Left ventricle myocardium inferior (tissue), 1 donor: ENCODE measurements at regions of chr6 and their contacts with region 1.

Region 1: GRCh38 chr6:74091136-74091793 is 395.3 kb downstream of the CD109 start:
- DNase-seq: no peak
- H3K4me3 ChIP-seq: no peak overlapping the region
- H3K27ac ChIP-seq: no peak overlapping the region
- H3K4me1 ChIP-seq: no peaks in the 10 kb centered on the region
- H3K27me3 ChIP-seq: no peaks in the 10 kb centered on the region
- CTCF ChIP-seq: peak; percentile 72

Region 2: GRCh38 chr6:73349311-73349710 is 742.0 kb before region 1 on chr6:
- intact Hi-C with region 1: no loop called
- DNase-seq: no peak
- H3K4me3 ChIP-seq: no peak overlapping the region
- H3K27ac ChIP-seq: no peak overlapping the region
- H3K4me1 ChIP-seq: no peaks in the 10 kb centered on the region
- H3K27me3 ChIP-seq: peaks cover 82% of the 10 kb centered on the region
- CTCF ChIP-seq: no peak

Region 3: DNA sequence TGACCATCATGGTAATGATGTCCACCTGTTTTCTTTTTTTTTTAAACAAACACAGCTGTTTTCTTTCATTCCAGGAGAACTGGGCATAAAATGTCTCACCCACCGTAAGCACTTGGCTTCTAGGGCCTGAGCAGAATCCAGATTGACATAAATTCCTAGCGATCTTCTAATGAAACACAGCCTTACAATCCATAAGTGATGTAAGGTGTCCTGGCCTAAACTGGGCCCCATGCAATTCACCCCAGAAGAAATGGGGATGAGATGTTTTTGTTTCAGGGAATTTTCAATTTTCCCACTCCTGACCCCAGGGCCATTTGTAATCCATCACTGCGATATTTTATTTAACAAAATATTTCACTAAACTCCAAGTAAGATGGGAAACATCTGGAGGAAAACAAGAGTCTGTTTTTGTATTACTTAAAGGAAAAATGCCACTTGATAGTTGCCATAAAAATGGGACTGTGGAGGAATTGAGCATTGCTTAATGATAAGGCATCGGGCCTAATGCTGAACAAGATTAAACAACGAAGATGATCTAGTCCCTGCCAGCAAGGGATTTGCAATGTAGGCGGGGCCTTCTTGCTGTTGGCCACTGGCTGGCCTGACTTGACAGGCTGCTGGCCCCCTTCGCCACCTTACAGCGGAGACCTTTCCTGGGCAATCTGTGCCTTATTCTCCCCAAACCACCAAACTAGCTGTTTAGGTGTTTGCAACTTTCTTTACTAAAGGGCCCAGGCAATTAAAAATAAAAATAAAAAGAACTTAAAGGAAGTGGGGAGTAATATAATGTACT is 211.6 kb before region 1 on chr6:
- intact Hi-C with region 1: no loop called
- DNase-seq: no peak
- H3K4me3 ChIP-seq: no peak overlapping the region
- H3K27ac ChIP-seq: peak overlapping the region; percentile 50
- H3K4me1 ChIP-seq: no peaks in the 10 kb centered on the region
- H3K27me3 ChIP-seq: no peaks in the 10 kb centered on the region
- CTCF ChIP-seq: no peak

Region 4: GRCh38 chr6:74312081-74312480 is 220.8 kb after region 1 on chr6:
- intact Hi-C with region 1: loop called (anchors 10 kb)
- DNase-seq: no peak
- H3K4me3 ChIP-seq: no peak overlapping the region
- H3K27ac ChIP-seq: no peak overlapping the region
- H3K4me1 ChIP-seq: no peaks in the 10 kb centered on the region
- H3K27me3 ChIP-seq: no peaks in the 10 kb centered on the region
- CTCF ChIP-seq: no peak

Region 5: DNA sequence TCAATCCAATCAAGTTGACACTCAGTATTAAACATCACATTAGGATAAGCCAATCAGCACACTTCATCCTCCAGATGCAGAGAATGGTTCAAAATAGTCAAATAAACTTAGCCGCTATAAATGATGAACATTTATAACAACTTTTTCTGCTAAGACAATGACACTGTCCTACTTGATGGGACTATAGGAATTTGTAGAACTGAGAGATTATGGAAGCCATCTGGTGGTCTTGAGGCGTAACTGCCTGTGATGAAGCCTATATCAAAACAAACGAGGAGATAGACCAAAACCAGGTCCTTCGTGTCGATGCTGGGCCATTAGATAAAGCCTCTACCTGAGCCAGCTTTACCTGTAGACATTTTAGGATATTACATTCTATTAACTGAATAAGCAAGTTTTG is 483.5 kb after region 1 on chr6:
- intact Hi-C with region 1: loop called (anchors 5 kb)
- DNase-seq: no peak
- H3K4me3 ChIP-seq: no peak overlapping the region
- H3K27ac ChIP-seq: no peak overlapping the region
- H3K4me1 ChIP-seq: no peaks in the 10 kb centered on the region
- H3K27me3 ChIP-seq: no peaks in the 10 kb centered on the region
- CTCF ChIP-seq: peak; percentile 72

Region 6: GRCh38 chr6:75208298-75209183 is 1117.3 kb after region 1 on chr6:
- intact Hi-C with region 1: loop called (anchors 10 kb)
- DNase-seq: peak; percentile 83
- H3K4me3 ChIP-seq: peak overlapping the region; percentile 60
- H3K27ac ChIP-seq: peak overlapping the region; percentile 63
- H3K4me1 ChIP-seq: peaks cover 80% of the 10 kb centered on the region
- H3K27me3 ChIP-seq: peaks cover 51% of the 10 kb centered on the region
- CTCF ChIP-seq: peak; percentile 88